Activated CD4-positive, alpha-beta memory T cell treated with anti-CD3 and anti-CD28 coated beads for 36 hours (primary cell): ENCODE measurements at regions of chr16 and their contacts with region 1.

Region 1: DNA sequence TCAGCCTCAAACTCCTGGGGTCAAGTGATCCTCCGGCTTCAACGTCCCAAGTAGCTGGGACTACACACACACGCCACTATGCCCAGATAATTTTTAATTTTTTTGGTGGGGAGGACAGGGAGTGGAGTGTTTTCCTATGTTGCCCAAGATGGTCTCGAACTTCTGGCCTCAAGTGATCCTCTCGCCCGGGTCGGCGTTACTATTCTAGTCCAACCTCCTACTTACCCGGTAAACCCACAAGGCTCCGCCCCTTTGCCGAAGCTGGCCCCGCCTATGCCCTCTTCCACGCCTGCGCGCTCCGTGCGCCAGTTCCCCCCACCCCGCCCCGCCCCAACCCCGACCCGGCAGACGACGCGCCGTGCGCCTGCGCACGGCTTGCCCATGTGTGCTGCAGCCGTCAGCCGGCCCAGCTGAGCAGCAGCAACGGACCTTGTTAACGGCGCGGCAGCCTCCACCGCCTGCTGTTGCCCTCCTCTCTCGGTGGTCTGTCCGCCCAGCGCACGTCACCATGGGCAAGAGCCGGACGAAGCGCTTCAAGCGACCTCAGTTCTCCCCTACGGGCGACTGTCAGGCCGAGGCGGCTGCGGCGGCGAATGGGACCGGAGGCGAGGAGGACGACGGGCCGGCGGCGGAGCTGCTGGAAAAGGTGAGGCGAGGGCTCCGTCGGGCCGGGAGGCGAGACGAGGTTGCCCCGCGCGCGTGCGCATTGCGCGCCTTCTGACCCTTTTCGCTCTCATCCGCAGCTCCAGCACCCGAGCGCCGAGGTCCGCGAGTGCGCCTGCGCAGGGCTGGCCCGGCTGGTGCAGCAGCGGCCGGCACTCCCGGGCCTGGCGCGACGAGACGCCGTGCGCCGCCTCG is at the start of gene HEATR3:
- DNase-seq: peak; percentile 98
- H3K4me3 Mint-ChIP-seq: peak within 1 kb of the TSS; percentile 90
- H3K27ac Mint-ChIP-seq: peak within 1 kb of the TSS; percentile 87
- H3K4me1 Mint-ChIP-seq: peaks cover 31% of the 10 kb centered on the region
- H3K27me3 Mint-ChIP-seq: no peaks in the 10 kb centered on the region
- total RNA-seq, gene HEATR3: 17.6 to 18.6 TPM

Region 2: DNA sequence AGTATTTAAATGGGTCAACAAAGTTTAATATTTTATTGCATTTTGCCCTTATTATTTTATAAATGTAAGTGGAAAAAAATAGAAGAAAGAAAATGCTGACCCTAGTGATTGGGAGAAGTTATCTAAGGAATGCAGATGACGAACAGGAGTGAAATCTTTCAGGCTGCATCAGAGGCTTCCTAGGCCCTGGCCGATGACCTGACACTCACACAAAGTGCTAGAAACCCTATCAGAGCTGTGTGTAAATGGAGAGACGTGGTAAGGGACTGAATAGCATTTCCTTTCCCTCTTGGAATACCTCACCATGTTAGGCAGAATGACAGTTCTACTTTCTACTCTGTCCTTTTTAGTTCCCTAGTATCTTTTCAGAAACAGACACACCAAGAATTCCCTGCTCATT is 85.7 kb before region 1 on chr16:
- CTCF ChIA-PET with region 1: no interaction called
- POLR2A ChIA-PET with region 1: no interaction called
- intact Hi-C with region 1: no loop called
- DNase-seq: no peak
- H3K4me3 Mint-ChIP-seq: no peak overlapping the region
- H3K27ac Mint-ChIP-seq: no peak overlapping the region
- H3K4me1 Mint-ChIP-seq: no peaks in the 10 kb centered on the region
- H3K27me3 Mint-ChIP-seq: no peaks in the 10 kb centered on the region

Region 3: DNA sequence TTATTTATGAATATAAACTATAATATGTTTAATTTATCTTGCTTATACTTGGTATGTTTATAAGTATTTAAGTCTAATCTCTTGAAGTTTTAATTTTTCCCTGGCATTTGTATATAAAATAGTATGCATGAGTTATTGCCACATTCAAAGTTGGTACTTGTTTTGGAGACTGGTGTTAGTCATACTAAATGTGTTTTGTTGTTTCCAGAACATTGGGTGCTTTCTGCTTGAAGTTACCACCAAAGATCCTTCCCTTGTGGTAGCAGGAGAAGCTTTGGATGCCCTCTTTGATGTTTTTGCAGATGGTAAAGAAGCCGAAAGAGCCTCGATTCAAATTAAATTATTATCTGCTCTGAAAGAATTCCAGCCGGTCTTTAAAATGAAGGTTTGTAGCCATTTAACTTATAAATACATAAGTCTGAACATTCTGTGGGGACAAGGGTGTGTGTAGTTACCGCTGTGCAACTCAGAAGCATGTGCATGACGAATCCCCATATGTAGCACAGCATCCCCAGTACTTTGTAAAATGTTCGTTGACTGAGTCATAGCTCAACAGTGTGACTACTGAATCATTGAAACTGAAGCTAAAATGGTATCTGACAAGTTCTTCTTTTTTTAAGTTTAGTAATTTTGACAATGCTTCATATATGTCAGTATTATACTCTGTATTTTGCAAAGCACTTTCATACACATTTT is 36.3 kb after region 1 on chr16:
- CTCF ChIA-PET with region 1: no interaction called
- POLR2A ChIA-PET with region 1: no interaction called
- intact Hi-C with region 1: loop called (anchors 2 kb)
- DNase-seq: peak; percentile 36
- H3K4me3 Mint-ChIP-seq: no peak overlapping the region
- H3K27ac Mint-ChIP-seq: peak overlapping the region; percentile 44
- H3K4me1 Mint-ChIP-seq: peaks cover 5% of the 10 kb centered on the region
- H3K27me3 Mint-ChIP-seq: no peaks in the 10 kb centered on the region

Region 4: DNA sequence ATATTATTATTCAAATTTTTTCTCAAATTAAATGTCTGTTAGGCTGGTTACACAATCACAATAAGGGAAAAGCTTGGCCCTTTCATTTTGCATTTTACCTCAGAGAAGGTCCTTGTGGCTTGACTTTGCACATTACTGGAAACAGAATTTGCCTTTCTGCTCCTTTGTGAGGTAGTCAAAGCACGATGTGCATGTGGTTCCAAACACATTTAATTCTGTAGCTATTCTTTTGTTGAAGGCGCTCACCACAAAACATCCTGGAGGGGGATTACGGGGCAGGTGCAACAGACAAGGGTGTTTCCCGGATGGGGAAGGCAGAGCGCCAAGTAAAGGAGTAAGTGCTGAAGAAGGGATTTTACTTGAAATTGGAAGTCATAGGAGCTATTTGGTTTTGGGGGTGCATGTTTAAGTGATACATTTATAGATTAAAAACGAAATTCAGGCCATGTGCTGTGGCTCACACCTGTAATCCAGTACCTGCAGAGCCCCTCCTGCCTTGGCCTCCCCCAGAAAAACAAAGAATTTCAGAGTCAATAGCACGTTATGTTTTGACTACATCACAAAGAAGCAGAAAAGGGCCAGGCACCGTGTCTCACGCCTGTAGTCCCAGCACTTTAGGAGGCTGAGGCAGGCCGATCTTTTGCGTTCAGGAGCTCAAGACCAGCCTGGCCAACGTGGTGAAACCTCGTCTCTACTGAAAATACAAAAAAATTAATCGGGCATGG is 56.0 kb after region 1 on chr16:
- CTCF ChIA-PET with region 1: interaction called, 4 read pairs
- POLR2A ChIA-PET with region 1: interaction called, 4 read pairs
- intact Hi-C with region 1: loop called (anchors 1 kb)
- DNase-seq: peak; percentile 81
- H3K4me3 Mint-ChIP-seq: no peak overlapping the region
- H3K27ac Mint-ChIP-seq: peak overlapping the region; percentile 10
- H3K4me1 Mint-ChIP-seq: peaks cover 15% of the 10 kb centered on the region
- H3K27me3 Mint-ChIP-seq: no peaks in the 10 kb centered on the region

Region 5: DNA sequence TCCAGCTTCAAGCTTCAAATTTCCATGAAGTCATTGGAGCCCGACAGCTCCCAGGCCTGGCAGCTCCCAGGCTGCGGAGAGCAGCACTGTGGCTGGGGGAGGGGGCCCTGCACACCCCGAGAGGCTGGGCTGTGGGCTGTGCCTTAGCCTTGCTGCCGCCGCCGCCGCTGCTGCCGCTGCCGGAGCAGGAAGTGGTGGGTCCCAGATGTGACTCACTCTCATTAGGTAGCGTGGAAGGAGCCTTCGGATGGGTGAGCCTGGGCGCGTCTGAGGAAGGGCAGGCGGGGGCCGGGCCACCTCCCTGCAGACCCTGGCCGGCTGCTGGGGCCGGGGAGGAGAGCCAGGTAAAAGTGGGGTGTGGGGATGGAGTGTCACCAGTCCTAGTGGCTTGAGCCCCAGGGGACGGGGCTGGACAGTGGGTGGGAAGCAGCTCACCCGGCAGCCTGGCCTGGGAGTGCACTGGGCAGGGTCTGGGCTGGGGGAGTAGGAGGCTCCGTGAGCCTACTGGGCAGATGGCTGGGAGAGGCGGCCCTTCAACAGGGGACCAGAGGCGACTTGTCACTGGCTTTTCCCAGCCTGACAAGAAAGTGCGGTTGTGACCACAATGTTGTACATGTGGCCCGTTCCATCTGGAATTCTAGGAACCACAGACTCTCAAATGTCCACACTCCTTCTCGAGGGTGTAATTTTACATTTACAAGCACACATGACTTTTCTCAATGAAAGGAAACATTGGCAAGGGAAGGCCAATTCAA is 200.7 kb after region 1 on chr16 and contains the start of gene ADCY7:
- CTCF ChIA-PET with region 1: interaction called, 3 read pairs
- POLR2A ChIA-PET with region 1: interaction called, 3 read pairs
- intact Hi-C with region 1: loop called (anchors 5 kb)
- DNase-seq: peak; percentile 91
- H3K4me3 Mint-ChIP-seq: peak within 1 kb of the TSS; percentile 94
- H3K27ac Mint-ChIP-seq: peak within 1 kb of the TSS; percentile 97
- H3K4me1 Mint-ChIP-seq: peaks cover 71% of the 10 kb centered on the region
- H3K27me3 Mint-ChIP-seq: no peaks in the 10 kb centered on the region
- total RNA-seq, gene ADCY7: 100.0 to 107 TPM